ENCODE measurements at regions of chr1 and their contacts with region 1.

Region 1: DNA sequence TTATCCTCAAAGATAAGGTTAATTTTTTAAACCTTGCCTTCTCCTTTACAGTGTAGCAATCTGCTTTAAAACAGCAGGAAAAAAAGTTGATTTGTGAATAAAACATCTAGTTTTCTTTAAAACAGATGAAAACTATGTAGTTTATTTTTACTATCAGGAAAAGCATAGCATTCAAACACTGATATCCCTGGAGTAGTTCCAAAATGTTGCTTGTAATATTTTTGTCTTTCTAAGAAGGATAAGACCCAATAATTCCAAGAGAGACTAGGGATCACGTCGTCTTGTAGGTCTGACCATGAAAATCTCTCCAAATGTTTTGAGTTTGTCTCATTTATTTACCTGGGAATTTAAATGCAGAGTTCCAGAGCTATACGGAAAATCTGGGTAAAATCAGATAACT is 204.0 kb downstream of the NTNG1 start:
- DNase-seq: no peak
- ATAC-seq: no peak
- H3K4me3 ChIP-seq: no peak overlapping the region
- H3K27ac ChIP-seq: no peak overlapping the region
- H3K4me1 ChIP-seq: no peaks in the 10 kb centered on the region
- H3K27me3 ChIP-seq: no peaks in the 10 kb centered on the region
- CTCF ChIP-seq: no peak

Region 2: DNA sequence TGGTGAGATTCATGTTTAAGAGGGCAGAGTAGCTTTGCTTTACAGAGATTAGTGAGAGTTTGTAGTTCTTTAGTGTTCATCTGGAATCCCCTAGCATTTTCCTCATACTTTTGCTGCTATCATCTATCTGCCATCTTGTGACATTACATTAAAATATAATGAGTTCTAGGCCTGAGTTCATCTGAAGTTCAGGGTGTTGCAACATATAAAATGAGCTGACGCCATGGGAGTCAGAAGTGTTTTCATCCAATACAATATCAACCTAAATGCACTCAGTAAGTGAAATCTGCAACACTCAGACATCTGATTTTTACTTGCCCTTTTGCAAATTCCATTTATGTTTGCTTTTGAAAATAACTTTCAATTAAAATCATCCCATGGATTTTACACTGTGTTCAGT is 50.1 kb before region 1 on chr1:
- intact Hi-C with region 1: loop called in 1 of 10 experiments (anchors 5 kb)
- DNase-seq: no peak
- ATAC-seq: no peak
- H3K4me3 ChIP-seq: no peak overlapping the region
- H3K27ac ChIP-seq: no peak overlapping the region
- H3K4me1 ChIP-seq: no peaks in the 10 kb centered on the region
- H3K27me3 ChIP-seq: no peaks in the 10 kb centered on the region
- CTCF ChIP-seq: no peak